IMR-90 (cell line): ENCODE measurements at regions of chr10 and their contacts with region 1.

Region 1: GRCh38 chr10:75358835-75359431 is 42.6 kb downstream of the ZNF503 start:
- DNase-seq: peak; percentile 82
- ATAC-seq: peak; percentile 96
- H3K4me3 ChIP-seq: no peak overlapping the region
- H3K27ac ChIP-seq: peak overlapping the region; percentile 53; the same call in 1 of the 2 replicates
- H3K4me1 ChIP-seq: peaks cover 13% of the 10 kb centered on the region
- H3K27me3 ChIP-seq: no peaks in the 10 kb centered on the region
- CTCF ChIP-seq: no peak
- POLR2A ChIP-seq: no peak
- RAD21 ChIP-seq: no peak

Region 2: DNA sequence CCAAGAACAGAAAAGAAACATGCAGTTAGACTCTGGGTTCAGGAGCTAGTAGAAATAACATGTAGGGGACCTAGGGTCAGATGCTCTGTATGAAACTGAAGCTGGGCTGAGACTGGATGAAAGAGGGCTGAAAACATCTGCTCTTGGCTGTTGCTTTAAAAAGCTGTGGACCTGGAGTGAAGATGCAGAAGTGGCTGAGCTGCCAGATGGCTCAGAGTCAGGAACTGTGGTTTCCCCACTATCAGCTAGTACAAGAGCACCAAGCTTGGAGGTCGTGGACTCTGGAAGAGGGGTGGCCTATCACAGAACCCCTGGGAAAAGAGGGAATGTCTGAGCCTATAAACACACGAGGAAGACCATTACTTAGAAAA is 1202.0 kb before region 1 on chr10:
- CTCF ChIA-PET with region 1: no interaction called
- POLR2A ChIA-PET with region 1: no interaction called
- dilution Hi-C with region 1: no loop called
- in situ Hi-C with region 1: no loop called
- intact Hi-C with region 1: loop called (anchors 5 kb)
- DNase-seq: peak; percentile 60
- ATAC-seq: peak; percentile 49
- H3K4me3 ChIP-seq: no peak overlapping the region
- H3K27ac ChIP-seq: no peak overlapping the region
- H3K4me1 ChIP-seq: peaks cover 3% of the 10 kb centered on the region; the same call in 1 of the 2 replicates
- H3K27me3 ChIP-seq: no peaks in the 10 kb centered on the region
- CTCF ChIP-seq: no peak
- POLR2A ChIP-seq: no peak
- RAD21 ChIP-seq: no peak

Region 3: GRCh38 chr10:75272896-75273295 is 86.0 kb before region 1 on chr10:
- CTCF ChIA-PET with region 1: no interaction called
- POLR2A ChIA-PET with region 1: interaction called, 13 read pairs
- dilution Hi-C with region 1: no loop called
- in situ Hi-C with region 1: no loop called
- intact Hi-C with region 1: no loop called
- DNase-seq: no peak
- ATAC-seq: peak; percentile 81
- H3K4me3 ChIP-seq: no peak overlapping the region
- H3K27ac ChIP-seq: no peak overlapping the region
- H3K4me1 ChIP-seq: peaks cover 10% of the 10 kb centered on the region
- H3K27me3 ChIP-seq: no peaks in the 10 kb centered on the region
- CTCF ChIP-seq: no peak
- POLR2A ChIP-seq: no peak
- RAD21 ChIP-seq: no peak